H1 (cell line): ENCODE measurements at regions of chr17 and their contacts with region 1.

Region 1: DNA sequence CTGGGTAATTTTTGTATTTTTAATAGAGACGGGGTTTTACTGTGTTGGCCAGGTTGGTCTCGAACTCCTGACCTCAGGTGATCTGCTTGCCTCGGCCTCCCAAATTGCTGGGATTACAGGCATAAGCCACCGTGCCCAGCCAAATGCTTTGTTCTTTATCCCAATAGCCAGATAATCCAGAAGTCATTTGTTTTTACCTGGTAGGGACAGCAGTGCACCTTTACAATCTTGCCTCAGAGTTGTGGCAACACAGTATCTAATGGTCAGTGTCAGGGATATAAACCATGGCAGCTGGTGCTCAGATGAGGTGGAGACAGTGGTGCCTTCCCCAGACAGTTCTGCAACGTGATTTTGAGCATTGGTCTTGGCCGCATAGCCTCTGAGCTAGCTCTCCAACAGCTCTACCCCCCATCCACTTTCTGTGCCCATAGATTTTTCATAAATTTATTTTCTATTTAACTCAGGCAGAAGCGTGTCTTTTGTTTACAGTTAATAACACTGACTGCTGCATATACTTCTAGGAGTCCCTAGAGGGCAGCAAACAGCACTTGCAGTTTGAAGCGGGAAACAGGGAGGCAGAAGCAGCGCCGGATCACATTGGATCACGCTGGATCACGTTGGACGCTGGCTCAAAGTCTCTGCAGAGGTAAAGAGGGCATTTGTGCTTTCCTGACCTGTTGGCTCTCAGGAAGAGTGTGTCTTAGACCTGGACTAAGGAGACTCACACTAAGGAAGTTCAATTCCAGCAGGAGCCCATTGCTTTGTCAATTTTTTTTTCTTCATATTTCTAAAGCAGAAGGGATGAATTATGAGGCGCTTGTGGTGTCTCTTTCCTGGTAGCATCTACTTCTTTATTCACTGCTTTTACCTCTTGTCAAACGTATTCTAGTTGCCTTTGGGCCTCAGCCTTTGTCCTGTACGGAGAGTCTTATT is 5.1 kb upstream of the GGT6 start:
- DNase-seq: no peak
- H3K4me3 ChIP-seq: no peak overlapping the region
- H3K27ac ChIP-seq: no peak overlapping the region
- H3K4me1 ChIP-seq: peaks cover 2 to 12% (median 7%) of the 10 kb centered on the region in 4 experiments; a peak in 5 of 7 replicates
- H3K27me3 ChIP-seq: no peaks in the 10 kb centered on the region; a peak in 1 of 7 replicates
- CTCF ChIP-seq: peak; percentile 61 to 88 (median 78)
- EP300 ChIP-seq: no peak
- POLR2A ChIP-seq: no peak
- RAD21 ChIP-seq: peak; percentile 44 to 67

Region 2: DNA sequence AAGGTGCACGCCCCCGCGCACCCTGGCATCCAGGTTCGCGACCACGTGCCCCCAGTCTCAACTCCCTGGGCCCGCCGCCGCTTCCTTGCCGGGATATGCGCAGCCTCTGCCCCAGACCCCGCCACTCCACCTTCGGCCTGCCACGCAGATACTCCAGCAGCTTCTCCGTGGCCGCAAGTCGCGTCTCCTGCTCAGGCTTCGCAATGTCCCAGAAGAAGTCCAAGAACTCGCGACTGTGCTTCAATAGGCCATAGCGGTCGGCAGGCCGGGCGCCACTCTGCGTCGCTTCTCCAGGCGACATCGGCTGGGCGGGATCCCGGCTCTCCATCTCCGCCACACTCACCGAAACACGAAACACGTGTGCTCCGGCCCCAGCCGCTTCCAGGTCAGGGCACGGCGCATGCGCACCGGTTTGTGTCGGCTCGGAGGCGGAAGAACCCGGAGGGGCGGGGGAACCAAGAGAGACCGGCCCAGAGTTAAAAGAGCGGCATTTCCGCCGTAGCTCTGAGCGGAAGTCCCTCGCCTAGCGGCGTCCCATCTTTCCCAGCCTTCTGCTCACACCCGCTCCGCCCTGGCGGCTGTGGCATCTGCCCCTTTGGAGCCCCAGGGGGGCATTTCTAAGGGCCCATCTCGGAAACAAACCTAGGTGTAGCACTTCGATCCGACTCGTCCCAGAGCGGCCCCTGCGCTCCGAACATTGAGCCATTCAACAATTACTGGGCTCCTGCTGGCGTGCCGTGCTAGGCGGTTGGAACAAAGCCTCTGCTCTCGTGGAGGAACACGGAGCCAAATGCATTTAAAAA is 10.3 kb before region 1 on chr17 and contains the start of gene MYBBP1A:
- CTCF ChIA-PET with region 1: interaction called, 11 read pairs
- POLR2A ChIA-PET with region 1: interaction called, 6 read pairs
- DNase-seq: peak; percentile 84 to 96
- H3K4me3 ChIP-seq: peak within 1 kb of the TSS; percentile 73 to 94 (median 84)
- H3K27ac ChIP-seq: peak within 1 kb of the TSS; percentile 74; the same call in 1 of the 2 replicates
- H3K4me1 ChIP-seq: peaks cover 6 to 17% (median 10%) of the 10 kb centered on the region in 4 experiments; a peak in 6 of 7 replicates
- H3K27me3 ChIP-seq: no peaks in the 10 kb centered on the region
- CTCF ChIP-seq: peak in 2 of 3 experiments; percentile 15 to 44; a peak in 3 of 4 replicates
- EP300 ChIP-seq: no peak
- POLR2A ChIP-seq: peak in 1 of 2 experiments; percentile 78; a peak in 2 of 3 replicates
- RAD21 ChIP-seq: no peak
- total RNA-seq, gene MYBBP1A: 151 and 153 TPM in 2 replicates

Region 3: DNA sequence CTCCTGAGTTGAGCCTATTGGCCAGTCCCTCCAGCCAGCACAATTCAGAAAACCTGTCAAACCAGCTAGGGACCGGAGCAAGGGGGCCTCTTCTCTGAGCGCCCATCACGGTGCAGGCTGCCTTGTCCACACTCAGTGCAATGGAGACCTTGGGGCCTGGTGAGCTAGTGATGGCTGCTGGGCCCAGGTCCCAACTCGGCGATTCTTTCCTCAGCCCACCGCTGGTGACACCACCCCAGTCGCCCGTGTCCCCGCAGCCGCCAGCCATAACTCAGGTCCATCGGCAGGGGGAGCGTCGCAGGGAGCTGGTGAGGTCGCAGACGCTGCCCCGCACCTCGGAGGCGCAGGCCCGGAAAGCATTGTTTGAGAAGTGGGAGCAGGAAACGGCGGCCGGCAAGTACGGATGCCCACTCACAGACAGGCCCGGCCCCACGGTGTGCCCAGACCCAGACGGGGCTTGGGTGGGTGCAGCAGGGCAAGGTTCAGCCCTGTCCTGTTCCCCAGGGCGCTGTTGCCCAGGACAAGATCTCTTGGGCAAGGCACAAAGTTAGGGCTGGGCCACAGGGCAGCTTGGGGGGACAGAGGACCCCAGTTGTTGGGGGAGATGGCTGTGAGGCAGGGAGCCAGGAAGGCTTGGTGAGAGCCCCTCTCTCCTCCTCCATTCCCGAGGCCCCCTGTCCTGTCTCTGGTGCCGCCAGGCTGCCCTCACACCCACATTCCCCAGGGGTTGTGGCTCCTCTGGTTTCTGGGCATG is 29.6 kb after region 1 on chr17:
- CTCF ChIA-PET with region 1: interaction called, 77 read pairs
- POLR2A ChIA-PET with region 1: interaction called, 5 read pairs
- DNase-seq: peak in 1 of 2 experiments; percentile 79
- H3K4me3 ChIP-seq: no peak overlapping the region
- H3K27ac ChIP-seq: no peak overlapping the region
- H3K4me1 ChIP-seq: peaks cover under 1 to 25% (median 15%) of the 10 kb centered on the region in 4 experiments
- H3K27me3 ChIP-seq: no peaks in the 10 kb centered on the region
- CTCF ChIP-seq: peak; percentile 57 to 76 (median 69)
- EP300 ChIP-seq: no peak
- POLR2A ChIP-seq: no peak
- RAD21 ChIP-seq: peak; percentile 35 to 51; a peak in 3 of 4 replicates

Region 4: DNA sequence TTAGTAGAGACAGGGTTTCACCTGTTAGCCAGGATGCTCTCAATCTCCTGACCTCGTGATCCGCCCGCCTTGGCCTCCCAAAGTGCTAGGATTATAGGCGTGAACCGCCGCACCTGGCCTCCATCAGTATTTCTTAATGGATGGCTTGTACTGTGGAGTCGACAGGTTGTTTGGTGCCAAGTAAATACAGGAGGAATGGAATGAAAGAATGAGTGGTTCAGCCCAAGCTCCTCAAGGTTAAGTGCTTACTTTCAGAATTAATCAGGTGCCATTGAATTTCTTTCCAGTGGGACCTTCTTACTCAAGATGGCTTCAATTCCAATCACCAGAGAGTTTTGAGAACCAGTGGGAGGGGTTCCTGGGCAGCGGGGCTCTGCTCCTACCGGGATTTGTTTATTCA is 51.0 kb after region 1 on chr17:
- CTCF ChIA-PET with region 1: interaction called, 170 read pairs
- POLR2A ChIA-PET with region 1: no interaction called
- DNase-seq: no peak
- H3K4me3 ChIP-seq: no peak overlapping the region
- H3K27ac ChIP-seq: no peak overlapping the region
- H3K4me1 ChIP-seq: peaks cover 0 to 6% (median 0%) of the 10 kb centered on the region in 4 experiments; a peak in 2 of 7 replicates
- H3K27me3 ChIP-seq: 0 out of 7 replicates have a peak, but pooled peaks cover 0 to 2% (median 0%) of the 10 kb centered on the region in 4 experiments
- CTCF ChIP-seq: no peak
- EP300 ChIP-seq: no peak
- POLR2A ChIP-seq: no peak
- RAD21 ChIP-seq: no peak

Region 5: DNA sequence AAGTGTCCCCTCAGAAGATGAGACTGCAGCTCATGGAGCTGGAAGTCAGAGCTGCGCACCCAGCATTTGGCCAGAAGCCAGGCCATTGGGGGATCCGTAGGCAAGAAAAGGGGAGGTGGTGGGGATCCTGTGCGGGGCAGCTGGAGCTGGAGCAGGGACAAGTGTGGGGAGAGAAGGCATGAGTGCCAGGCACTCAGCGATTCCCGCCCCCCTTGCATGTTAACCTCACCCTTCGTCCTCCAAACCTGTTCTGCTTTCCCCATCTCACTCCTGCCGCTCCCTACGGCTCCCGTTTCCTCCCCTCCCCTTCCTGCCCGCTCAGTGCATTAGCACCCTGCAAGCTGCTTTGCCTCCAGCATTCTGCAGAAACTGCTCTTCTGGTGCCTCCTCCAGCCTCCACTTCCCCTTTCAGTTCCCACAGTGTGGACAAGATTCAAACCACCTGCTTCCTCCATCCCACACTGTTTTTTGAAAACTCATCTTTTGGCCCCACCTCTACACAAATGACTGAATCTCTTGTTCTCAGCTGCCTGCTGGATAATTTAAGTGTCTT is 70.4 kb after region 1 on chr17:
- CTCF ChIA-PET with region 1: interaction called, 49 read pairs
- POLR2A ChIA-PET with region 1: interaction called, 3 read pairs
- DNase-seq: no peak
- H3K4me3 ChIP-seq: peak overlapping the region in 1 of 4 experiments; percentile 25; a peak in 1 of 8 replicates
- H3K27ac ChIP-seq: no peak overlapping the region
- H3K4me1 ChIP-seq: peaks cover 7 to 33% (median 17%) of the 10 kb centered on the region in 4 experiments
- H3K27me3 ChIP-seq: peaks cover 9 to 39% (median 27%) of the 10 kb centered on the region in 4 experiments
- CTCF ChIP-seq: no peak
- EP300 ChIP-seq: no peak
- POLR2A ChIP-seq: no peak
- RAD21 ChIP-seq: no peak